ENCODE measurements at regions of chr14 and their contacts with region 1.

Region 1: DNA sequence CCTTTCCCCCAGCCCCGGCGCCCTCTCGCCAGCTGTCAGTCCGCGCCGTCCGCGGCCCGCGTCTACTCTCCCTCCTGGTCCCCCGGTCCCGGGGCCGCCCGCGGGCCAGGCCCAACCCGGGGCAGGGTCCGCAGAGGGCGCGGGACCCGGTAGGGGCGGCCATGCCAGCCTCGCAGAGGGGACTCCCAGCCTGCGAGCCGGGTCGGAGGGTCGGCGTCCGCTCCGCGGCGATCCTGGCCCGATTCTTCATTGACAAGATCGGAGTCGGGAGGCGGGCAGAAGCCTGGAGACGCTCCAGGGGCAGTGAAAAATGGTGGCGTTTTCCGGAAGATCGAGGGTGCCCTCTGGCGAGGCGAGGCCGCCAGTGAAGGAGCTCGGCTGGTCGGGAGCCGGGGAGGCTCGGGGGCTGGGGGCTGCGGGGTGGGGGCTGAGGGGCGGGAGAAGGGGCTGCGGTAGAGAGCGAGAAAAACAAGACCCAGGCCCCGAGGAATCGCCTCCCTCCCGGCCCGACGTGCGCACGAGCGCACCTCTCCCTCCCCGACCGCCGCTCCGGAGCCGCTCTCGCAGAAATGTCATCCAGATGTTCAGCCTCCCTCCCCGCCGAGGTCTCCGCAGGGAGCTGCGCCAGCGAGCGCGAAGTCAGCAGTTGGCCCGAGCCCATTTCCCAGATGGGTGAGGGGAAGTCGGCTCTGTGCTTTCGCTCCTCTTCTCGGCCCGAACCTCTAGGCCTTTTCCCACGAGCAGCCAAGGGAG is 647 bp upstream of the TGFB3 start:
- DNase-seq: peak; percentile 86 to 93
- ATAC-seq: peak; percentile 76 to 79 (median 76)
- H3K4me3 ChIP-seq: peak overlapping the region; percentile 79
- H3K27ac ChIP-seq: peak overlapping the region; percentile 98
- H3K4me1 ChIP-seq: peaks cover 25% of the 10 kb centered on the region
- H3K27me3 ChIP-seq: no peaks in the 10 kb centered on the region
- CTCF ChIP-seq: peak; percentile 56

Region 2: GRCh38 chr14:75577729-75578101 is 404.7 kb before region 1 on chr14:
- intact Hi-C with region 1: loop called in 1 of 2 experiments (anchors 5 kb)
- DNase-seq: peak; percentile 88 to 94
- ATAC-seq: peak; percentile 83 to 89 (median 86)
- H3K4me3 ChIP-seq: peak overlapping the region; percentile 69
- H3K27ac ChIP-seq: peak overlapping the region; percentile 87
- H3K4me1 ChIP-seq: peaks cover 22% of the 10 kb centered on the region
- H3K27me3 ChIP-seq: no peaks in the 10 kb centered on the region
- CTCF ChIP-seq: peak; percentile 82

Region 3: GRCh38 chr14:75631453-75631831 is 351.0 kb before region 1 on chr14:
- intact Hi-C with region 1: no loop called
- DNase-seq: no peak
- ATAC-seq: no peak
- H3K4me3 ChIP-seq: no peak overlapping the region
- H3K27ac ChIP-seq: no peak overlapping the region
- H3K4me1 ChIP-seq: no peaks in the 10 kb centered on the region
- H3K27me3 ChIP-seq: no peaks in the 10 kb centered on the region
- CTCF ChIP-seq: no peak

Region 4: DNA sequence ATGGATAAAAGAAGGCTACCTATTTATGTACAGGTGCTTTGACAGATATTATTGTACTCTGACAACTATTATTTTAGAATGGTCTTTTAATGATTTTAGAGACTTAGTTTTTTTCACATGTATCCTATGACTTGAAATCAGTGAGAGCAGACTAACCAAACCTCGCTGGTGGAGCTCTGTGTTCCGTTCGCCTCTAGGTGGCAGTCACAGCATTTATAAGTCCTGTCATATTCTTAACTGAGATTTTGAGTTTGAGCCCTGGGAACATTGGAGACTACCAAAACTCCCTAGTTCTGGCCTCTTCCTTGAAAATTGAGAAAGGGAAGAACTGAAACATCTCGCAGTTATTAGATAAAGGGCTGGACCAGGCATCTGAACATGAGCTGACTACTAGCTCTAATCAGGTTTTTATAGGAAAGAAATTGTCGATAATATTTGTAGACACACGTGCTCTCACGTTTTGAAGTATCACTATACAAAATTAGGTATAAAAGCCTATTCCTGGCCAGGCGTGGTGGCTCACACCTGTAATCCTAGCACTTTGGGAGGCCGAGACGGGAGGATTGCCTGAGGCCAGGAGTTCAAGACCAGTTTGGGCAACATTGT is 273.1 kb before region 1 on chr14:
- intact Hi-C with region 1: loop called (anchors 1 to 2 kb)
- DNase-seq: peak; percentile 65 to 76
- ATAC-seq: peak in 3 of 4 donors; percentile 33 to 64 (median 39)
- H3K4me3 ChIP-seq: no peak overlapping the region
- H3K27ac ChIP-seq: no peak overlapping the region
- H3K4me1 ChIP-seq: peaks cover 13% of the 10 kb centered on the region
- H3K27me3 ChIP-seq: no peaks in the 10 kb centered on the region
- CTCF ChIP-seq: peak; percentile 81

Region 5: GRCh38 chr14:75800792-75801191 is 181.7 kb before region 1 on chr14:
- intact Hi-C with region 1: loop called in 1 of 2 experiments (anchors 10 kb)
- DNase-seq: no peak
- ATAC-seq: no peak
- H3K4me3 ChIP-seq: no peak overlapping the region
- H3K27ac ChIP-seq: no peak overlapping the region
- H3K4me1 ChIP-seq: peaks cover 7% of the 10 kb centered on the region
- H3K27me3 ChIP-seq: no peaks in the 10 kb centered on the region
- CTCF ChIP-seq: no peak

Region 6: GRCh38 chr14:75861161-75861621 is 121.3 kb before region 1 on chr14:
- intact Hi-C with region 1: no loop called
- DNase-seq: no peak
- ATAC-seq: peak; percentile 75 to 95 (median 86)
- H3K4me3 ChIP-seq: no peak overlapping the region
- H3K27ac ChIP-seq: no peak overlapping the region
- H3K4me1 ChIP-seq: peaks cover 6% of the 10 kb centered on the region
- H3K27me3 ChIP-seq: no peaks in the 10 kb centered on the region
- CTCF ChIP-seq: no peak

Region 7: DNA sequence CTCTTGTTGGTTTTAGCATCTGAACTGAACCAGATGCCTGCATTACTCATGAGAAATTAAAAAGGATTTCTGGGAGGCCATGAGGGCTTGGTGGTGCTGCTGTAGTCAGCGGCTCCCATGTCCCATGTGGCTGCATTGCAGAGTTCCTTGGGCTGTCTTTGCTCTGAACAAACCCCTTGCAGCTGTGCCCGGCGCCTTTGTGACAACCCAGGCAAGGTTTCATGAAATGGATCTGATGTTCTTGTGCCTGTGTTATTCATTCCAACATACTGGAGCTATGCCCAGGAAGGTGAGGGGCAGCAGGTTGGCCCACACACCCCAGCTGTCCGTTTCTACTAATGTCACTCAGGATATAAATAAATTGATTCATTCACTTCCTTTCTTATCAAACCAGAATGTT is 41.4 kb before region 1 on chr14:
- intact Hi-C with region 1: loop called (anchors 2 to 5 kb)
- DNase-seq: peak; percentile 72 to 89
- ATAC-seq: peak; percentile 97 to 98 (median 98)
- H3K4me3 ChIP-seq: no peak overlapping the region
- H3K27ac ChIP-seq: peak overlapping the region; percentile 84
- H3K4me1 ChIP-seq: peaks cover 5% of the 10 kb centered on the region
- H3K27me3 ChIP-seq: no peaks in the 10 kb centered on the region
- CTCF ChIP-seq: no peak